ENCODE measurements at regions of chr1 and their contacts with region 1.

Region 1: GRCh38 chr1:40691538-40692428 is at the start of gene NFYC:
- DNase-seq: peak; percentile 97
- ATAC-seq: peak; percentile 89
- H3K4me3 Mint-ChIP-seq: peak within 1 kb of the TSS; percentile 91
- H3K27ac Mint-ChIP-seq: peak within 1 kb of the TSS; percentile 98
- H3K4me1 Mint-ChIP-seq: peaks cover 57% of the 10 kb centered on the region
- H3K27me3 Mint-ChIP-seq: no peaks in the 10 kb centered on the region
- CTCF ChIP-seq: no peak
- total RNA-seq, gene NFYC: 46.5 to 47.5 TPM (median 47.4 TPM) in 3 replicates

Region 2: DNA sequence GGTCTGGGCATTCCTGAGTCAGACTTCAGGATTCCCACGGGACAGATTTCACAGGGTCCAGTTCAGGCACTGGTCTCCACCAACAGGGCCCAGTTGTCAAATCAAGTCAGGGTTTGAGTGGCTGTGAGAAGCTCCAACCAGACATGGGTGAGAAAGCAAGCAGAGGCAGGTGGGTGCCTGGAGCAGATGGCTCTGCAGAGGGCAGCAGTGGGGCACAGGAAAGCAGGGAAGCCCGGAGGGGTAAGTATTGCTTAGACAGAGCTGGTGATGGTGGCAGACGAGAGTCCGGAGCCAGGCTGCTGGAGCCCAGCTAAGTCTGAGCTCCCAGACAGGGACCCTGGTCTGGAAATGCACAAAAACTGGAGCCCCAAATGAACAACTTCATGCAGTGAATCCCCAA is 66.7 kb before region 1 on chr1:
- CTCF ChIA-PET with region 1: interaction called, 11 read pairs
- POLR2A ChIA-PET with region 1: no interaction called
- DNase-seq: peak; percentile 45
- ATAC-seq: peak; percentile 89
- H3K4me3 Mint-ChIP-seq: no peak overlapping the region
- H3K27ac Mint-ChIP-seq: no peak overlapping the region
- H3K4me1 Mint-ChIP-seq: no peaks in the 10 kb centered on the region
- H3K27me3 Mint-ChIP-seq: no peaks in the 10 kb centered on the region
- CTCF ChIP-seq: no peak

Region 3: DNA sequence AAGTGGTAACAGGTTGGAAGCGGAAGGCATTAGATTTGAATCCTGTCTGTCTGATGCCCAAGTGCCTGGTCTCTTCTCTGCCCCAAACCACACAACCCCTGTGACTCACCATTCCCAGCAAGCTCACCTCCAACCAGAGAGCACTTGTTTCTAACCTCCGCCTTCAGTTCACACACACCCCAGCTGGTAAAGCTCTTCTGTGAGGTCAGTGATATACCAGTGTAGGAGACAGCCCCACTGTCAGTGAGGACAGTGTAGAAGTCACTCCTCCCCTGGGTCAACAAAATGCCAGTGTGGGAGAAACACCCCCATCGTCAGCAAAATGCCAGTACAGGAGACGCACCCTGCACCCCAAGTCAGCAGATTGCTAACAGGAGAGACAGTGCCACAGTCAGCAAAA is 28.9 kb before region 1 on chr1:
- CTCF ChIA-PET with region 1: interaction called, 6 read pairs
- POLR2A ChIA-PET with region 1: interaction called, 17 read pairs
- DNase-seq: no peak
- ATAC-seq: no peak
- H3K4me3 Mint-ChIP-seq: no peak overlapping the region
- H3K27ac Mint-ChIP-seq: no peak overlapping the region; the same call in 1 of the 2 replicates
- H3K4me1 Mint-ChIP-seq: peaks cover 33% of the 10 kb centered on the region
- H3K27me3 Mint-ChIP-seq: no peaks in the 10 kb centered on the region; the same call in 1 of the 2 replicates
- CTCF ChIP-seq: no peak

Region 4: GRCh38 chr1:40709100-40709801 is 17.5 kb after region 1 on chr1:
- CTCF ChIA-PET with region 1: interaction called, 5 read pairs
- POLR2A ChIA-PET with region 1: interaction called, 39 read pairs
- DNase-seq: peak; percentile 71
- ATAC-seq: peak; percentile 95
- H3K4me3 Mint-ChIP-seq: peak overlapping the region; percentile 94
- H3K27ac Mint-ChIP-seq: peak overlapping the region; percentile 99
- H3K4me1 Mint-ChIP-seq: peaks cover 53% of the 10 kb centered on the region
- H3K27me3 Mint-ChIP-seq: no peaks in the 10 kb centered on the region
- CTCF ChIP-seq: no peak

Region 5: DNA sequence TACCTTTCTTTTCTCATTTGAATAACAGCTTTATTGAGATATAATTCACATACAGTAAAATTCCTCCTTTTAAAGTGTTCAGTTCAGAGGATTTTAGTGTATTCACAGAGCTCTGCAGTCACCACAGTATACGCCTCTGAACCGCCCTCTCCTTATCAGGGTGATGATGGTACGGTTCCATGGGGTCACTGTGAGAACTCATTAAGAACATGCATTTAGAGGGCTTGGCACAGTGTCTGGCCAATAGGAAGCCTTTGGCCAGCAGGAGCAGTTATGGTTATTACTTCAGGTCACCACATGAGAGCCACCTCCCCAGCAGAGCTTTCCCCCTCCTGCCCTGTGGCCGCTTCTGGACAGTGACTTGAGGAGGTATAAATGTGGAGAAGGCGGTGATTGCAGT is 119.1 kb after region 1 on chr1:
- CTCF ChIA-PET with region 1: no interaction called
- POLR2A ChIA-PET with region 1: no interaction called
- DNase-seq: no peak
- ATAC-seq: no peak
- H3K4me3 Mint-ChIP-seq: no peak overlapping the region
- H3K27ac Mint-ChIP-seq: no peak overlapping the region
- H3K4me1 Mint-ChIP-seq: peaks cover 7% of the 10 kb centered on the region
- H3K27me3 Mint-ChIP-seq: no peaks in the 10 kb centered on the region; the same call in 1 of the 2 replicates
- CTCF ChIP-seq: no peak